Esophagus muscularis mucosa (tissue), 4 donors: ENCODE measurements at regions of chr3 and their contacts with region 1.

Region 1: GRCh38 chr3:54951405-54951804 is 23.5 kb upstream of the LRTM1 start:
- DNase-seq: no peak
- H3K4me3 ChIP-seq: no peak overlapping the region
- H3K27ac ChIP-seq: no peak overlapping the region
- H3K4me1 ChIP-seq: peaks cover 10 to 44% (median 40%) of the 10 kb centered on the region in 4 donors
- H3K27me3 ChIP-seq: no peaks in the 10 kb centered on the region
- CTCF ChIP-seq: peak; percentile 60 to 77 (median 67)
- EP300 ChIP-seq: no peak
- POLR2A ChIP-seq: no peak

Region 2: DNA sequence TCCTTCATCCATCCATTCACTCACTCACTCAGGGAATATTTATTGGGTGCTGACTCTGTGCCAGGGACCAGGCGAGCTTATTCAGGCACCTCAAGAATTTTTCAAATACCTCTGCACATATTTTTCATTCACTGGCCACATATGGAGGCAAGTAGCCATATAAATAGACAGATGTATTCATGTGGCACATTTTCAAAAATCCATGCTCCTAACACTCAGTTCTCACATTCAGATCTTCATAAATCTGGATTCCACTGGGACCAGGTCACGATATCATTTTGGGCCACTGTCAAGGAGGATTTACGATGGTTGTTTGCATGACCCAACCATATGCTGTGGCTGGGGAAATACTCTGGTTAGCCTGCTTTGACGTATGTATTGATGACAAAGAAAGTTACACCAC is 218.2 kb after region 1 on chr3:
- intact Hi-C with region 1: loop called (anchors 5 kb)
- DNase-seq: peak; percentile 29
- H3K4me3 ChIP-seq: no peak overlapping the region
- H3K27ac ChIP-seq: peak overlapping the region; percentile 0 to 46 (median 43)
- H3K4me1 ChIP-seq: peaks cover 0 to 33% (median 20%) of the 10 kb centered on the region in 4 donors
- H3K27me3 ChIP-seq: no peaks in the 10 kb centered on the region
- CTCF ChIP-seq: no peak
- EP300 ChIP-seq: no peak
- POLR2A ChIP-seq: no peak